ENCODE measurements at regions of chr9 and their contacts with region 1.

Region 1: GRCh38 chr9:35603987-35604577 is 980 bp upstream of the TESK1 start:
- DNase-seq: peak; percentile 100
- ATAC-seq: peak; percentile 88 to 94 (median 92)
- H3K4me3 ChIP-seq: peak overlapping the region; percentile 87
- H3K27ac ChIP-seq: peak overlapping the region; percentile 95
- H3K4me1 ChIP-seq: peaks cover 37% of the 10 kb centered on the region
- H3K27me3 ChIP-seq: no peaks in the 10 kb centered on the region
- CTCF ChIP-seq: peak; percentile 97

Region 2: GRCh38 chr9:35481347-35481975 is 122.6 kb before region 1 on chr9:
- intact Hi-C with region 1: loop called (anchors 5 kb)
- DNase-seq: peak in 1 of 2 donors; percentile 41
- ATAC-seq: peak; percentile 83 to 86 (median 85)
- H3K4me3 ChIP-seq: no peak overlapping the region
- H3K27ac ChIP-seq: no peak overlapping the region
- H3K4me1 ChIP-seq: no peaks in the 10 kb centered on the region
- H3K27me3 ChIP-seq: no peaks in the 10 kb centered on the region
- CTCF ChIP-seq: peak; percentile 79

Region 3: GRCh38 chr9:35489313-35490154 is 114.5 kb before region 1 on chr9 and contains the start of gene RUSC2:
- intact Hi-C with region 1: loop called (anchors 5 kb)
- DNase-seq: peak; percentile 92 to 95
- ATAC-seq: peak; percentile 78 to 87 (median 82)
- H3K4me3 ChIP-seq: peak within 1 kb of the TSS; percentile 89
- H3K27ac ChIP-seq: peak within 1 kb of the TSS; percentile 99
- H3K4me1 ChIP-seq: peaks cover 18% of the 10 kb centered on the region
- H3K27me3 ChIP-seq: no peaks in the 10 kb centered on the region
- CTCF ChIP-seq: peak; percentile 30
- total RNA-seq, gene RUSC2: 34.4 to 101 (median 72.1) TPM

Region 4: DNA sequence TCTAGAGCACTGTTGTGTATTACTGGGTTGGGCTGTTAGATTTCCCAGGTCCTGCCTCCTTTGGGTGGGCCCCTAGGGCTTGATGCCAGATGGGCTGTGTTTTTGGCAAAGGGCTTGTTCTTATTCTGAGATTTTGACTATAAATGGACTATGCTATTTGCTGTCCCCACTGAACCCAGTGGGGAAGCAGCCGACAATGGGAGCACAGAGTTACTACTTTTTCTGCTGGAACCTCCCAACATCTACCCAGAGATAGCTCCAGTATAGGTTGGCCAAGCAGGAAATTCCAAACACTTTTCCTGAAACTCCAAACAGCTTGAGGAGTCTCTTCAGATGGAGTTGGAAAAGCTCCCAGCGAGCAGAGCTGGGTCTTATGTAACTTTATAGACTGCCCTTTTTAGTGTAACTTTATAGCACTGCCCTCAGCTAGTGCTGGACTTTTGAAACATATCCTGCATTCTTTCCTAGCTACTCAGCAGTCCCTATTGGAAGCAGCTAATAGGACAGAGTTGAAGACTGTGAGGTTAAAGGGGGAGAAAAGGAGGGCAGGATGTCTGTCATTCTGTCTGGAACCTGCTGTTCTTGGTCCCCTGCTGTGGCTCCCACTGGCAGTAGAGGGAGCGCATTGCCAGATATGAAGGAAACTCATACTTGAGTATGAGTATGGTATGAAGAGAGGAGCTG is 93.2 kb before region 1 on chr9:
- intact Hi-C with region 1: loop called in 1 of 2 experiments (anchors 10 kb)
- DNase-seq: peak; percentile 71 to 83
- ATAC-seq: peak; percentile 93 to 96 (median 94)
- H3K4me3 ChIP-seq: no peak overlapping the region
- H3K27ac ChIP-seq: peak overlapping the region; percentile 92
- H3K4me1 ChIP-seq: peaks cover 62% of the 10 kb centered on the region
- H3K27me3 ChIP-seq: no peaks in the 10 kb centered on the region
- CTCF ChIP-seq: peak; percentile 39

Region 5: GRCh38 chr9:35563791-35564197 is 40.3 kb before region 1 on chr9:
- intact Hi-C with region 1: loop called (anchors 5 kb)
- DNase-seq: peak; percentile 71 to 85
- ATAC-seq: peak; percentile 52 to 64 (median 58)
- H3K4me3 ChIP-seq: peak overlapping the region; percentile 58
- H3K27ac ChIP-seq: peak overlapping the region; percentile 90
- H3K4me1 ChIP-seq: peaks cover 82% of the 10 kb centered on the region
- H3K27me3 ChIP-seq: no peaks in the 10 kb centered on the region
- CTCF ChIP-seq: no peak

Region 6: DNA sequence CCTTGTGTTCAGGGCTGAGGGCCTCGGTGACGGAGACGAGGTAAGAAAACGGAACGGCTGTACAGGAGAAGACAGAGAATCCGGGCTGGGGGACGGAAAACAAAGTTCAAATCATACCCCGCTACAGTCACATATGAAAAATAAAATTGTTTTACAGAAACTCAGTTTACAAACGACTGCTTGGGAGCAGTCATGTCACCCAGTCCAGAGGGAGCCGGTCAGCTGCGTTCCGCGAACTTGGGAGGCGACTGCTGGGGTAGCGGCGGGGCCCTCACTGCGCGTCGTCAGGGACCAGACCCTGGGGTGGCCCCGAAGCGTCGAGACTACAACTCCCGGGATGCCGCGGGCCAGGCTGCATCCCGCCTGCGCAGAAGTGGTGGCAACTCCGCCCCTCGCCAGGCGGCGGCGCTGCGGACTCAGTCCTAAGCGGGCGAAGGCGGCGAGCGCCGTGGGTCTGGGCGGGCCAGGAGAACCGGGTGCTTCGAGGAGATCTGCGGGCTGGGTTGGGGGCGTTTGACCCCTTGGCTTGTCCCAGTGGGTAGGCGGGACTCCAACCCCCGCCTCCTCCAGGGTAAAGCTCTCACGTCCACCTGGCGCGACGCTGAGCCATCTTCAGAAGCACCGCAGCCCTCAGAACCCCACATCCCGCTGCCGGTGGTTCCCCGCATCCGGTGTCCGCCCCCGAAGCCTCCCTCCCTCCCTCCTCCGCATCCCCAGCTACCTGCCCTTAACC is 42.6 kb after region 1 on chr9:
- intact Hi-C with region 1: loop called in 1 of 2 experiments (anchors 5 kb)
- DNase-seq: peak; percentile 93 to 96
- ATAC-seq: peak; percentile 96 to 100 (median 97)
- H3K4me3 ChIP-seq: peak overlapping the region; percentile 85
- H3K27ac ChIP-seq: peak overlapping the region; percentile 92
- H3K4me1 ChIP-seq: no peaks in the 10 kb centered on the region
- H3K27me3 ChIP-seq: no peaks in the 10 kb centered on the region
- CTCF ChIP-seq: peak; percentile 95

Region 7: GRCh38 chr9:35696525-35697215 is 92.6 kb after region 1 on chr9:
- intact Hi-C with region 1: loop called in 1 of 2 experiments (anchors 10 kb)
- DNase-seq: peak; percentile 46 to 74
- ATAC-seq: peak; percentile 71 to 85 (median 76)
- H3K4me3 ChIP-seq: no peak overlapping the region
- H3K27ac ChIP-seq: peak overlapping the region; percentile 46
- H3K4me1 ChIP-seq: peaks cover 13% of the 10 kb centered on the region
- H3K27me3 ChIP-seq: no peaks in the 10 kb centered on the region
- CTCF ChIP-seq: peak; percentile 82

Measured in psoas muscle (tissue), 8 donors.